Activated CD4-positive, alpha-beta T cell treated with anti-CD3 and anti-CD28 coated beads for 36 hours (primary cell): ENCODE measurements at regions of chr7 and their contacts with region 1.

Region 1: GRCh38 chr7:159015454-159016410 is 128.9 kb downstream of the VIPR2 start:
- DNase-seq: no peak
- ATAC-seq: no peak
- H3K4me3 Mint-ChIP-seq: no peak overlapping the region
- H3K27ac Mint-ChIP-seq: no peak overlapping the region
- H3K4me1 Mint-ChIP-seq: peaks cover 30% of the 10 kb centered on the region
- H3K27me3 Mint-ChIP-seq: peaks cover 4% of the 10 kb centered on the region

Region 2: GRCh38 chr7:158818325-158819213 is 197.2 kb before region 1 on chr7:
- CTCF ChIA-PET with region 1: no interaction called
- POLR2A ChIA-PET with region 1: no interaction called
- intact Hi-C with region 1: loop called in 1 of 2 experiments (anchors 5 kb)
- DNase-seq: peak; percentile 85
- ATAC-seq: peak; percentile 74
- H3K4me3 Mint-ChIP-seq: peak overlapping the region; percentile 73
- H3K27ac Mint-ChIP-seq: peak overlapping the region; percentile 93
- H3K4me1 Mint-ChIP-seq: peaks cover 87% of the 10 kb centered on the region
- H3K27me3 Mint-ChIP-seq: no peaks in the 10 kb centered on the region

Region 3: GRCh38 chr7:158985583-158985982 is 30.1 kb before region 1 on chr7:
- CTCF ChIA-PET with region 1: no interaction called
- POLR2A ChIA-PET with region 1: no interaction called
- intact Hi-C with region 1: no loop called
- DNase-seq: no peak
- ATAC-seq: no peak
- H3K4me3 Mint-ChIP-seq: no peak overlapping the region
- H3K27ac Mint-ChIP-seq: no peak overlapping the region
- H3K4me1 Mint-ChIP-seq: no peaks in the 10 kb centered on the region
- H3K27me3 Mint-ChIP-seq: peaks cover 4% of the 10 kb centered on the region

Region 4: GRCh38 chr7:159004411-159004810 is 11.3 kb before region 1 on chr7:
- CTCF ChIA-PET with region 1: interaction called, 3 read pairs
- POLR2A ChIA-PET with region 1: no interaction called
- intact Hi-C with region 1: loop called (anchors 1 to 2 kb)
- DNase-seq: peak; percentile 76
- ATAC-seq: peak; percentile 97
- H3K4me3 Mint-ChIP-seq: no peak overlapping the region
- H3K27ac Mint-ChIP-seq: peak overlapping the region; percentile 82
- H3K4me1 Mint-ChIP-seq: peaks cover 21% of the 10 kb centered on the region
- H3K27me3 Mint-ChIP-seq: peaks cover 15% of the 10 kb centered on the region